Activated B cell treated with CpG ODN at 0.5 μM for 24 hours (primary cell): ENCODE measurements at regions of chr20 and their contacts with region 1.

Region 1: DNA sequence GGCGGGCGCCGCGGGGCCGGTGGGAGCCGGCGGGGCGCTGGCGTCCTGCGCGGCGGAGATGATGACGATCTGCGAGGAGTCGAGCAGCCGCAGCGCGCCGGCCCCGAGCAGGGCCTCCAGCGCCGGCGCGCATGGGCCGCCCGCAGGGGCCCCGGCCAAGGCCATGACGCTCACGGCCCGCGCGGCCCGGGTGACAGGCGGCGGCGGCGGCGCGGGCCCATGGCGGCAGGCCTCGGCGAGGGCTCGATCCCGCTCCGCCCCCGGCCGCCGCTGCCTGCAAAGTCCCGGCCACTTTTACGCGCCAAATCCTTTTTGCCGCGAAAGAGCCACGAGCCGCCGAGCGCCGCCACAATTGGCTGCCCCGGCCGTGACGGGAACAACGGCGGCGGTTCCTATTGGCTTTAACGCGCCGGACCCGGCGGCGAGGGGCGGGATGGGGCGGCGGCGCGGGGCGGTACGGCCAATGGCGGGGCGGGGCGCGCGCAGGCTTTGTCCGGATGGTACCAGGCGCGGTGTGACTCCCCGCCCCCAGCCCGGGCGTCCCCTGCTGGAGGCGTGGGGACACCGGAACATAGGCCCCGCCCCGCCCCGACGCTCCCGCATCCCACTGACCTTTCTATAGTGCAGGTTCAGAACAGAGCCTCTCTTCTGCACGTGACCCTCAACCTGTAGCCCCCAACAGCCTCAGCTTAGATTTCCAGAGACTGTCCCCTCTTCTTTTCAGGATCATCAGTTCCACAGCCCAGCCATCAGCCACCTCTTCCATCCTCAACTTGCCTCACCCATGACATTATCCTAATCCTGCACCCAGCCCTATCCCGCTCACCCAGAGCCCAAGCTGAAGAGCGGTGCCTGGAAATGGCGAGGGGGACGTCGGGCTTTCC is at the start of gene E2F1:
- DNase-seq: peak; percentile 95
- ATAC-seq: peak; percentile 93
- H3K4me3 Mint-ChIP-seq: peak within 1 kb of the TSS; percentile 86
- H3K27ac Mint-ChIP-seq: peak within 1 kb of the TSS; percentile 77
- H3K4me1 Mint-ChIP-seq: peaks cover 30% of the 10 kb centered on the region
- H3K27me3 Mint-ChIP-seq: no peaks in the 10 kb centered on the region
- CTCF ChIP-seq: no peak
- total RNA-seq, gene E2F1: 6.7 and 8.9 TPM in 2 replicates

Region 2: DNA sequence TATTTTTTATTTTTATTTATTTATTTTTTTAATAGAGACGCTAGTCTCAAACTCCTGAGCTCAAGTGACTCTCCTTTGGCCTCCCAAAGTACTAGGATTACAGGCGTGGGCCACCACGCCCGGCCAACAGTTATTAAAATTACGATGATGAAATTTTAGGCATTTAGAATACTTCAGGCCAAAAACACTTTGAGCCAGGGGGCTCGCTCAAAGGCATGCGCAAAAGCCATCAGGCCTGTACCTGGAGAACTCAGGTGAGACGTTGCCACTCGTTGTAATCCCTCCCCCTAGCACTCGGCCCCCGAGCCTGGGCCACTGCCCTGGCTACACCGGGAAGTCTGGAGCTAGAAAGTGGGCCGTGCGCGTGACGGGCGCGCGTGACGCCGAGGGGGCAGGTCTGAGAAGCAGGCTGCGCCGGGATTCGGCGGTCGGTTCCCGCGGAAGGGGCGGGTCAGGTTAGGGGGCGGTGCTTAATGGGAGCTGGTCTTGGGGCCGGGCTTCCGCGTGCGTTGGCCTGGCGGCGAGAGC is 196.8 kb before region 1 on chr20:
- CTCF ChIA-PET with region 1: no interaction called
- POLR2A ChIA-PET with region 1: interaction called, 3 read pairs
- intact Hi-C with region 1: loop called (anchors 1 kb)
- DNase-seq: peak; percentile 99
- ATAC-seq: peak; percentile 96
- H3K4me3 Mint-ChIP-seq: peak overlapping the region; percentile 84
- H3K27ac Mint-ChIP-seq: peak overlapping the region; percentile 88
- H3K4me1 Mint-ChIP-seq: peaks cover 15% of the 10 kb centered on the region
- H3K27me3 Mint-ChIP-seq: no peaks in the 10 kb centered on the region
- CTCF ChIP-seq: no peak

Region 3: GRCh38 chr20:33524261-33524660 is 162.1 kb before region 1 on chr20:
- CTCF ChIA-PET with region 1: no interaction called
- POLR2A ChIA-PET with region 1: no interaction called
- intact Hi-C with region 1: no loop called
- DNase-seq: no peak
- ATAC-seq: no peak
- H3K4me3 Mint-ChIP-seq: no peak overlapping the region
- H3K27ac Mint-ChIP-seq: no peak overlapping the region
- H3K4me1 Mint-ChIP-seq: peaks cover 26% of the 10 kb centered on the region
- H3K27me3 Mint-ChIP-seq: no peaks in the 10 kb centered on the region
- CTCF ChIP-seq: no peak

Region 4: GRCh38 chr20:33719989-33720709 is 33.8 kb after region 1 on chr20 and contains the start of gene PXMP4:
- CTCF ChIA-PET with region 1: no interaction called
- POLR2A ChIA-PET with region 1: interaction called, 11 read pairs
- intact Hi-C with region 1: loop called (anchors 1 kb)
- DNase-seq: peak; percentile 67
- ATAC-seq: peak; percentile 97
- H3K4me3 Mint-ChIP-seq: peak within 1 kb of the TSS; percentile 93
- H3K27ac Mint-ChIP-seq: peak within 1 kb of the TSS; percentile 91
- H3K4me1 Mint-ChIP-seq: peaks cover 27% of the 10 kb centered on the region
- H3K27me3 Mint-ChIP-seq: no peaks in the 10 kb centered on the region
- CTCF ChIP-seq: no peak
- total RNA-seq, gene PXMP4: 6.8 and 7.7 TPM in 2 replicates